Prostate gland (tissue), 2 donors: ENCODE measurements at regions of chr17 and their contacts with region 1.

Region 1: DNA sequence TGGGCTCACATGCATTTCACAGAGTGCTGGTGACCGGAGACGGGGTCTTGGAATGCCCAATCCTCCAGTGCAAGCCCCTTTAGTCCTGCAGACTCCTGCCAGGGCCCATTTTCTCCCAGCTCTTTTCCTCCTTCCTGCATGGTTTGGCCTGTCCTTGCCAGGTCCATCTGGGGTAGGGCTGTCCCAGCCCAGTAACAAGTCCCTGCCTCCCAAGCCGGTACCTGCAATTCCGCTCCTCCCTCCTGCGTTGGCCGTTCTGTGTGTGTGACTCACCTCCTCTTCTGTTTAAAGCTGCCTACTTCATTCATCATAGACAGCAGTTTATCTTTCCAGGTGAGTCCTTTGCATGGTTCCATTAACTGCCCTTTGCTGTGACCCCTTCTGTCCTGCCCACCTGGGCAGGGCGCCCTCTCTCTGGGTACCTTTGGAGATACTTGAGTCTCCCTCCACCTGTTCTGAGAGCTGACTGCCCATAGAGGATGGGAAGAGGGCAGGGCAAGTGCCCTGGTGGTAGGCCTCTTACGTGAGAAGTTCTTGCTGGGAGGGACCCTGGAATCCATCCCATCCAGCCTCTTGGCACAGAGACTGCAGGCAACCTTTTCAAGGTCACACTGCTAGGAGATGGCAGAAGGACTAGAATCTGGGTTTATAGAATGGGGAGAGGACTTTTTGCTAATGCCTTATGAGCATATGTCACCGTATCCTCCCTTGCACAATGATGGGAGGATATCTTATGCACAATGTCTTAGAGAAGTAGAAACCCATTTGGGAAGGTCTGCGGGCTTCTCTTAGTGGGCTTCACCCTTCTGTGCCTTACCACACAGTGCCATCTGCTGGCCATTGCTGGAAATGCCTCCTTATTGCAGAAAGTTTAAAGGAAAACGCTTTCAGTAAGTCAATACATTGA is 29.7 kb upstream of the LGALS9 start:
- DNase-seq: peak; percentile 80
- H3K4me3 ChIP-seq: no peak overlapping the region
- H3K27ac ChIP-seq: no peak overlapping the region
- H3K4me1 ChIP-seq: no peaks in the 10 kb centered on the region
- H3K27me3 ChIP-seq: no peaks in the 10 kb centered on the region
- CTCF ChIP-seq: peak; percentile 82 to 92 (median 90)
- POLR2A ChIP-seq: no peak

Region 2: DNA sequence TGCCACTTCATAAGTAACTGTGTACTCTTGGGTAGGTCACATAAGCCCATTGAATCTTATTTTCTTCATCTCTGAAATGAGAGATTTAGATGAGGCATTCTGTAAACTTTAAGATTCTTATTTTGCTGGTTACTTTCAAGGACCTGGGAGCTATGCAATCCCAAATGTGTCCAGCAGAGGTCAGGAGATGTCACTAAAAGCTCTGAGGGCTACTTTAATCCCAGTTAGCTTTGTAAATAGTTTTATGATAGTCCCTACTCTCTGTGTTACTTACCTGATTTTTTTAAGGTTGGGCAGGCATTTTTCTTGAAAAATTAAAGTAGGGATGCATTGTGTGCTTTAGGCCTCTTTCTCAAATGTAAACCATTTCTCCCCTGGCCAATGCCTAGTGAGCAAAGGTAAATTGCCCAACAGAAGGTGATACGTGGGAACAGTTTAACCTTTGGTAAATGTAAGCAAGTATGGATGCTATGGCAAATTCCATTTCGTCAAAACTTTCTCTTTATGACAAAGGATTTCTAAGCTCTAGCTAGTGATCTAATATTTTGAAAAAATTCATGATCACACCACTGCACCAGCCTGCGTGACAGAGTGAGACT is 364.5 kb before region 1 on chr17:
- intact Hi-C with region 1: loop called (anchors 5 kb)
- DNase-seq: peak; percentile 84
- H3K4me3 ChIP-seq: no peak overlapping the region
- H3K27ac ChIP-seq: no peak overlapping the region
- H3K4me1 ChIP-seq: no peaks in the 10 kb centered on the region
- H3K27me3 ChIP-seq: no peaks in the 10 kb centered on the region
- CTCF ChIP-seq: peak; percentile 82 to 94 (median 92)
- POLR2A ChIP-seq: no peak

Region 3: DNA sequence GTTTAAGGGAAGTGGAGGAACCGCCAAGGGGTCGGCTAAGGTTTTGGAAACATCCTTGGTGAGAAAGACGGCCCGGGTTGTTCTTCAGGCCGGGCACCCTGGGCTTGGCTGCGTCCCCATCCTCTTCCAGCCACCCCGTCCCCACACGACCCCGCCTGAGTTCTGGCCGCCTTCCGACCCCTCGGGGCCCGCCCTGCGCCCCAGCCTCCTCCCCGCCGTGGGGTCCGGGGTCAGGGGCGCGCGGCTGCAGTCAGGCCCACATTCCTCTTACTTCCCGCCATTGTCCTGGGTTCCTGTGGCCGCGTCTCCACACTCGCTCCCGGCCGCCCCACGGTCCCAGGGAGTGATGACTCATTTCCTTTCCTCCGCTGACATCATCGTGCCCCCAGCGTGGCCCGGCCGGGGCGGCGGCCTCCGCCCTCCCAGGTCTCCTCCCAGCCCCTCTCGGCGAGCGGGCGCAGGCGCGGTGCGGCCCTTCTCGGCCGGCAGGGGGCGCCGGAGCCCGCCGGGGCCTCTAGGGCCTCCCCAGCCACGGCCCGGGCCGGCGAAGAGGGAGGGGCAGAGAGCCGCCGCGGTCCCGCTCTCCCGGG is 247.8 kb before region 1 on chr17:
- intact Hi-C with region 1: loop called (anchors 1 kb)
- DNase-seq: peak; percentile 83
- H3K4me3 ChIP-seq: peak overlapping the region; percentile 48 to 55
- H3K27ac ChIP-seq: peak overlapping the region; percentile 82 to 86
- H3K4me1 ChIP-seq: no peaks in the 10 kb centered on the region
- H3K27me3 ChIP-seq: no peaks in the 10 kb centered on the region
- CTCF ChIP-seq: peak; percentile 97 to 100 (median 98)
- POLR2A ChIP-seq: peak; percentile 89

Region 4: GRCh38 chr17:27455914-27456680 is 145.2 kb before region 1 on chr17 and contains the start of gene KSR1:
- intact Hi-C with region 1: loop called (anchors 5 kb)
- DNase-seq: peak; percentile 75
- H3K4me3 ChIP-seq: peak within 1 kb of the TSS; percentile 63 to 70
- H3K27ac ChIP-seq: peak within 1 kb of the TSS; percentile 74 to 80
- H3K4me1 ChIP-seq: peaks cover 2% of the 10 kb centered on the region
- H3K27me3 ChIP-seq: no peaks in the 10 kb centered on the region
- CTCF ChIP-seq: peak in 3 of 4 experiments; percentile 24 to 44 (median 30)
- POLR2A ChIP-seq: peak; percentile 75
- total RNA-seq, gene KSR1: 11.5 to 23.7 TPM

Region 5: GRCh38 chr17:27494192-27495091 is 106.9 kb before region 1 on chr17:
- intact Hi-C with region 1: loop called (anchors 2 kb)
- DNase-seq: peak; percentile 93
- H3K4me3 ChIP-seq: peak overlapping the region; percentile 13 to 14
- H3K27ac ChIP-seq: peak overlapping the region; percentile 72 to 79
- H3K4me1 ChIP-seq: peaks cover 4% of the 10 kb centered on the region
- H3K27me3 ChIP-seq: no peaks in the 10 kb centered on the region
- CTCF ChIP-seq: peak in 3 of 4 experiments; percentile 29 to 68 (median 57)
- POLR2A ChIP-seq: peak; percentile 73

Region 6: GRCh38 chr17:27506348-27507231 is 94.7 kb before region 1 on chr17:
- intact Hi-C with region 1: no loop called
- DNase-seq: no peak
- H3K4me3 ChIP-seq: no peak overlapping the region
- H3K27ac ChIP-seq: no peak overlapping the region
- H3K4me1 ChIP-seq: no peaks in the 10 kb centered on the region
- H3K27me3 ChIP-seq: no peaks in the 10 kb centered on the region
- CTCF ChIP-seq: no peak
- POLR2A ChIP-seq: no peak

Region 7: DNA sequence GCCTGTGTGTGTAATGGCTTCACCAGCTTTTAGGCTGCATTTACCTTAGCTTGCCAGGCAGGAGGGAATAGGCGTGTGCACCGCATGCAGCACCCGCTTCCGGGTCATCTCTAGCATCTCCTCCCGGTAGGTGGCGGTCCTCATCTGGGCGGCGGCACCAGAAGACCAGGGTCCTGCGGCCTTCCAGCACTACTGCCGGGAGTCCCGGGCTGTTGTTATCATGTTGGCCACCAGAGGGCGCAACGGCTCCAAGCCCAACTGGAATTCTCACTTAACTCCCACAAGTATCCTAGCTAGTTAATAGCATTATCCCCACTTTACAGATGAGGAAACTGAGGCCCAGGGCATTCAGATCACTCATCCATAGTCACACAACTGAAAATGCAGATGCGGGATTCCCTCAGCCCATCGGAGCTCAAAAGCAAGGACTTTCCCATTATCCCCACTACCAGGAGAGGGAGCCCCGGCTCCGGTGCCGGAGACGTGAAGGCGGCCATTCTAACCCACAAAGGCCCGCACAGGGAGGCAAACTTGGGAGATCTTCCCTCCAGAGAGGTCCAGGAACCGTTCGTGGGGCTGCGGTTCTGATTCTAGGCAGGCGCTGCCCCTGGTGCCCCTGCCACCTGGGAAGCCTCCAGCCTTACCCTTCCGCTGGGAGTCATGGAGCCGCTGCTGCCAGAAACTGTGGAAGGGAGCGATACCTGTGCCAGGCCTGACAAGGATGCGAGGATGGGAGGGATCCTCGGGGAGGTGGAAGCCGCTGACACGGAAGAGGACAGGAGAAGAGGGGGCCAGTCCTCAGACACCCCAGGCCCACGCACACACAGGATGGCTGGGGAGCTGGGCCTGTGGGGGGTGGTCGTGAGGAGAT is 53.6 kb after region 1 on chr17:
- intact Hi-C with region 1: loop called (anchors 2 kb)
- DNase-seq: peak; percentile 36
- H3K4me3 ChIP-seq: no peak overlapping the region
- H3K27ac ChIP-seq: no peak overlapping the region
- H3K4me1 ChIP-seq: no peaks in the 10 kb centered on the region
- H3K27me3 ChIP-seq: no peaks in the 10 kb centered on the region
- CTCF ChIP-seq: peak; percentile 79 to 91 (median 83)
- POLR2A ChIP-seq: no peak

Region 8: DNA sequence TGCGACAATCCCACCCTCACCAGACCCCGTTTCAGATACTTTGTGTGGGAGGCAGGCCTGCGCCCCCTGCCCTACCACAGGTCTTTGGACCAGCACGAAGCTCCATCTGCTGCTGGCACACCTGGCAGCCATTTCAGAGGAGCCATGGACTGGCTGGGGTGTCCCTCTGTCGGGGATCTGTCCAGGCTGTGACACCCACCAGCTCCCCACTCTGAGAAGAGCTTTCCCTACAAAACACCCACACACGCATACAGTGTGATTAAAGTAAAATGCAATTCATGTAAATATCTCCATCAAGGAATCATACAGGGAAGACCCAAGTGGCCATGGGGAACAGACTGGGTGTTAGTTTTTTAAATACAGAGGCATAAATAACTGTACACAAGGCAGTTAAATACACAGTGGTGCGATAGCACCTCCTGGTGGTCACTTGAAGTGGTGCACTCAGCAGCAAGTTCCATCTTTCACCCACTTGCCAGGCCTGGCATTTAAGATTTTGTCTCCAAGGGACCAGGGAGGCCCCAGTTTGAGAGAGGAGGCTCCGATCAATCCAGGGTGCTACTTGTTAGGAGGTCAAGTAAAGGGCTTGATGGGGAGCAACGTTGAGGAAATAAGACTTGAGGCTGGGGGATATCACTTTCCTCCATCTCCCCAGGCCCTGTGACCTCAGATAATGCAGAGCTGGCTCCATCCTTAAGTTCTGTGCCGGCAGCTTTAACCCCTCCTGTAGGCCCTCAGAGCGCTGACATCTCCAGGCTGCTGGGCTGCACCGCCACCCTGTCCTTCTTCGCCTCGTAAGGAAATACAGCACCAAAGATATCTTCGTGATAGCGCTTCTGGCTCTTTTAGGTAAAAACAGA is 155.4 kb after region 1 on chr17:
- intact Hi-C with region 1: loop called (anchors 1 kb)
- DNase-seq: peak; percentile 27
- H3K4me3 ChIP-seq: no peak overlapping the region
- H3K27ac ChIP-seq: no peak overlapping the region
- H3K4me1 ChIP-seq: no peaks in the 10 kb centered on the region
- H3K27me3 ChIP-seq: no peaks in the 10 kb centered on the region
- CTCF ChIP-seq: peak; percentile 80 to 89 (median 82)
- POLR2A ChIP-seq: no peak